ENCODE measurements at regions of chr4 and their contacts with region 1.

Region 1: DNA sequence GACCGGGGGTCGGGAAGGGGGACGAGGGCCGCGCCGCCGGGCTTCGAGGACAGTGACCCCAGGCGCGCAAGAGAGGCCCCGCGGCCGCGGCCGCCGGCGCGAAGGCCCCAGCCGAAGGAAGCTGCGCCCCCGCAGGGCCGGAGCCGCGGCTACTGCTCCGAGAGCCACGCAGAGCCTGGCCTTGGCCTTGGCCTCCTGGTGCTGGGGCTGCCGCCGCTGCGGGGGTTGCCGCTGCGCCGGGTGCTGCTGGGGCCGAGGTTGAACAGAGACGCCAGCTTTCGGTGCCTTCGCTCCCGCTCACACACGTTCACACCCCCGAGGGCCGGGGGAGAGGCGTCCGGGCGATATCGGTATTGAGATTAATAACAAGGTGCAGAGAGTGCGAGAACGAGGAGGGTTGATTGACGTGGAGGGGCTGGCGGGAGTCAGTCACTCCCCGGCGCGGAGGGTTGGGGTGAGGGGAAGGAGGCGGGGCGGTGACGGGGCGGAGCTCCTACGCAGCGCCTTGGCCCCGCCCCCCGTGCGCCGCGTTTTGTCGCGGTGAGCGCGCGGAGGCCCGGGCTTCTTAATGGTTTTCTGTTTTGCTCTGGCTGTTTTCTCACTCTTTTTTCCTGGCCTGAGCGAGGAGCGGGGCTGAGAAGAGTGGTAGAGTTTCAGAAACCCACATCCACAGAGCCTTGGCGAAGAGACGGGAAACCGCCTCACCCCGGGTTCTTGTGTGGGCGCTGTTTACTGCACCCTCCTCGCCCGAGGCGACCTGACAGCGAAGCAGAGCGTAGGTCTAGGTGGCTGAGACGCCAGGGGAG is 878 bp upstream of the CNOT6L start:
- DNase-seq: peak; percentile 91 to 98 (median 96)
- ATAC-seq: peak; percentile 68 to 74
- H3K4me3 Mint-ChIP-seq: peak overlapping the region; percentile 83 to 98 (median 97)
- H3K27ac Mint-ChIP-seq: peak overlapping the region; percentile 92 to 100 (median 99)
- H3K4me1 Mint-ChIP-seq: peaks cover 34 to 63% (median 60%) of the 10 kb centered on the region in 4 donors
- H3K27me3 Mint-ChIP-seq: peaks cover 0 to 3% (median 0%) of the 10 kb centered on the region in 5 donors

Region 2: DNA sequence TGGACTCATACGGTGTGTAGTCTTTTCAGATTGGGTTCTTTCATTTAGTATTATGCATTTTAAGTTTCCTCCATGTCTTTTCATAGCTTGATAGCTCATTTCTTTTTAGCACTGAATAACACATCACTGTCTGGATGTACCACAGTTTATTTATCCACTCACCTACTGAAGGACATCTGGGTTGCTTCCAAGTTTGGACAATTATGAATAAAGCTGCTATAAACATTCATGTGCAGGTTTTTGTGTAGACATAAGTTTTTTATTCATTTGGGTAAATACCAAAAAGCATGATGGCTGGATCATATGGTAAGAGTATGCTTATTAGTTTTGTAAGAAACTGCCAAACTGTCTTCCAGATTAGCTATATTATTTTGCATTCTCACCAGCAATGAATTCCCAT is 29.9 kb before region 1 on chr4:
- POLR2A ChIA-PET with region 1: interaction called, 10 read pairs
- DNase-seq: no peak
- ATAC-seq: no peak
- H3K4me3 Mint-ChIP-seq: peak overlapping the region in 9 of 10 donors; percentile 19 to 66 (median 29)
- H3K27ac Mint-ChIP-seq: peak overlapping the region in 8 of 10 donors; percentile 16 to 69 (median 50)
- H3K4me1 Mint-ChIP-seq: peaks cover 26 to 86% (median 68%) of the 10 kb centered on the region in 4 donors
- H3K27me3 Mint-ChIP-seq: no peaks in the 10 kb centered on the region

Region 3: GRCh38 chr4:77800483-77801259 is 19.4 kb before region 1 on chr4:
- POLR2A ChIA-PET with region 1: interaction called, 23 read pairs
- DNase-seq: no peak
- ATAC-seq: peak; percentile 26 to 34
- H3K4me3 Mint-ChIP-seq: peak overlapping the region; percentile 57 to 86 (median 74)
- H3K27ac Mint-ChIP-seq: peak overlapping the region; percentile 45 to 97 (median 72)
- H3K4me1 Mint-ChIP-seq: peaks cover 35 to 97% (median 77%) of the 10 kb centered on the region in 4 donors
- H3K27me3 Mint-ChIP-seq: no peaks in the 10 kb centered on the region

Region 4: GRCh38 chr4:77833126-77833724 is 13.2 kb after region 1 on chr4:
- POLR2A ChIA-PET with region 1: interaction called, 20 read pairs
- DNase-seq: no peak
- ATAC-seq: no peak
- H3K4me3 Mint-ChIP-seq: no peak overlapping the region
- H3K27ac Mint-ChIP-seq: peak overlapping the region in 2 of 10 donors; percentile 0 to 58
- H3K4me1 Mint-ChIP-seq: peaks cover 8 to 19% (median 14%) of the 10 kb centered on the region in 4 donors
- H3K27me3 Mint-ChIP-seq: no peaks in the 10 kb centered on the region

Region 5: GRCh38 chr4:77862478-77863216 is 42.6 kb after region 1 on chr4 and contains the start of gene MRPL1:
- POLR2A ChIA-PET with region 1: interaction called, 876 read pairs
- DNase-seq: peak in 9 of 10 donors; percentile 75 to 93 (median 89)
- ATAC-seq: peak; percentile 78 to 83
- H3K4me3 Mint-ChIP-seq: peak within 1 kb of the TSS; percentile 93 to 99 (median 97)
- H3K27ac Mint-ChIP-seq: peak within 1 kb of the TSS; percentile 96 to 100 (median 100)
- H3K4me1 Mint-ChIP-seq: peaks cover 27 to 74% (median 68%) of the 10 kb centered on the region in 4 donors
- H3K27me3 Mint-ChIP-seq: peaks cover 0 to 3% (median 0%) of the 10 kb centered on the region in 5 donors
- polyA plus RNA-seq, gene MRPL1: 35.6 to 37.9 (median 37.1) TPM